MCF 10A (cell line): ENCODE measurements at regions of chr7 and their contacts with region 1.

Region 1: GRCh38 chr7:18352339-18353255 is 143.0 kb upstream of the HDAC9 start:
- DNase-seq: peak; percentile 74
- H3K4me3 Mint-ChIP-seq: peak overlapping the region; percentile 39
- H3K27ac Mint-ChIP-seq: no peak overlapping the region
- H3K4me1 Mint-ChIP-seq: peaks cover 5% of the 10 kb centered on the region
- H3K27me3 Mint-ChIP-seq: no peaks in the 10 kb centered on the region
- CTCF ChIP-seq: peak; percentile 69

Region 2: DNA sequence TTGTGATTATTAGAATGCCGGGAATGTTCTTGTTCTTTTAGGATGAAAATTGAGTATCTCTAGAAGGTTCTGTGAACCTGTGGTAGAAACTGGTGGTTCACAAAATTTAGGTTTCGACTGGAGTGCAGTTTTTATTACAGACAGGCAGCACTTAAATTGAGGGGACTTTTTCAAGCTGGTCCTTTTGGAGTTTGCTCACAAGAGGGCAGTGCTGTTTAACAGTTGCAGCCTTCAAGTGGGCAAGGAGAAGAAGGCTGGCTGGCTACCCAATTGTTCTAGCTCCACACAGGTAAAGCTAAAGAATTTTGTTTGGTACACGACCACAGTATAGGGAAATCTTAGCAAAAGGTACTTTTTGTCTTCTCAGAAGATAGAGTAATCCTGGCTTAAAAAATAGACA is 645.9 kb before region 1 on chr7:
- CTCF ChIA-PET with region 1: interaction called, 10 read pairs
- POLR2A ChIA-PET with region 1: interaction called, 4 read pairs
- intact Hi-C with region 1: no loop called
- DNase-seq: peak; percentile 83
- H3K4me3 Mint-ChIP-seq: no peak overlapping the region
- H3K27ac Mint-ChIP-seq: peak overlapping the region; percentile 55
- H3K4me1 Mint-ChIP-seq: peaks cover 7% of the 10 kb centered on the region
- H3K27me3 Mint-ChIP-seq: no peaks in the 10 kb centered on the region
- CTCF ChIP-seq: peak; percentile 67

Region 3: DNA sequence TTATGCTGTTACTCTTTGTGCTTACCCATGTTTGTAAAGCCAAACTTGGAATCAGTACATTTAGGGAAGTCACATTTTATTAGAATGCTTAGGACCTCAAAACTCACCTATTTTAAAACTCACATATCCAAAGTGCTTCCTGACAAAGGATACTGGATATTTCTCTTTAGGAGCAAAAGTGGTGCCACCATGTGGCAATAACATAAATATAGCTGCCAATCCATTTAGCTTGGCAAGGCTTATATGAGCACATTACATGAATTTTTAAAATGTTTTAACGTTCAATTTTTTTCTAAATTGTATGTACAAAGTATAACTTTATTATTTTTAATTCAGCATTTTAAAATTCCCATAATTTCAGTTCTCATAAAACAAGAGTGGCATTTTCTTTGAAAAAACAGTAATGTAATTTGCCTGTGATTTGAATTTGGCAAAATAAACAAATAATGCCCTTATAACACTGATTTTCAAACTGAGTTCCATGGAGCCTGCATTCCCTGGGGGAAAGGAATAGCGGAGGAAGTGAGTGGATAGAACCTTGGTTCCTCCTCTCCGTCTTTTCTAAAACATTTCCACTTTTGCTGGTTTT is 218.4 kb after region 1 on chr7:
- CTCF ChIA-PET with region 1: interaction called, 291 read pairs
- POLR2A ChIA-PET with region 1: interaction called, 33 read pairs
- intact Hi-C with region 1: loop called (anchors 1 kb)
- DNase-seq: peak; percentile 63
- H3K4me3 Mint-ChIP-seq: no peak overlapping the region
- H3K27ac Mint-ChIP-seq: no peak overlapping the region
- H3K4me1 Mint-ChIP-seq: no peaks in the 10 kb centered on the region
- H3K27me3 Mint-ChIP-seq: no peaks in the 10 kb centered on the region
- CTCF ChIP-seq: peak; percentile 56

Region 4: DNA sequence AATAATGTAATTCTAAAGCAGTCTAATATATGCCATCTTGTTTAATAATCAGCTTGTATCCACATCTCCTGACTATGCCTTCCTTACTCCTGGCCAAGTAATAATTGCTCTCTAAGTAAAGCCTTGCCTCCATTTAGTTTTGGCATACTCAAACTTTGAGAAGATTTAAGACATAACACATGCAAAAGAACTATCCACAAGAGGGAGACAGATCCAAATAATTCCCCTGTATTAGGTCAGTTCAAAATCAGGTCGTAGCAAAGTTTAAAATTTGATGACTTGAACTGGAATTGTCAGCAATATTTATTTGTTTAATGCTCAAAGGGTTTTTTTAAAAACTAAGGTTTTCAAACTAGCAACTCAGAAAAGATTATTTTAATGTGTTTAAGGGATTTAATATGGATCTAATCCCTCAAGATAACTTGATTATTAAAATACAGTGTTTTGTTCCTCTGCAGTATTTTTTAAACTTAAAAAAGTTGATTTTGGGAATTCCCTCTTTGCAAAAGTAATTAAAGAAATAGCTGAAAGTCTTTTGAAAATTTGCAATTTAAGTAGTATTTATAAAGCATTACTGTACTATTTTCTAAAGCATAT is 238.2 kb after region 1 on chr7:
- CTCF ChIA-PET with region 1: interaction called, 23 read pairs
- POLR2A ChIA-PET with region 1: no interaction called
- intact Hi-C with region 1: no loop called
- DNase-seq: peak; percentile 57
- H3K4me3 Mint-ChIP-seq: no peak overlapping the region
- H3K27ac Mint-ChIP-seq: no peak overlapping the region
- H3K4me1 Mint-ChIP-seq: no peaks in the 10 kb centered on the region
- H3K27me3 Mint-ChIP-seq: no peaks in the 10 kb centered on the region
- CTCF ChIP-seq: peak; percentile 54

Region 5: DNA sequence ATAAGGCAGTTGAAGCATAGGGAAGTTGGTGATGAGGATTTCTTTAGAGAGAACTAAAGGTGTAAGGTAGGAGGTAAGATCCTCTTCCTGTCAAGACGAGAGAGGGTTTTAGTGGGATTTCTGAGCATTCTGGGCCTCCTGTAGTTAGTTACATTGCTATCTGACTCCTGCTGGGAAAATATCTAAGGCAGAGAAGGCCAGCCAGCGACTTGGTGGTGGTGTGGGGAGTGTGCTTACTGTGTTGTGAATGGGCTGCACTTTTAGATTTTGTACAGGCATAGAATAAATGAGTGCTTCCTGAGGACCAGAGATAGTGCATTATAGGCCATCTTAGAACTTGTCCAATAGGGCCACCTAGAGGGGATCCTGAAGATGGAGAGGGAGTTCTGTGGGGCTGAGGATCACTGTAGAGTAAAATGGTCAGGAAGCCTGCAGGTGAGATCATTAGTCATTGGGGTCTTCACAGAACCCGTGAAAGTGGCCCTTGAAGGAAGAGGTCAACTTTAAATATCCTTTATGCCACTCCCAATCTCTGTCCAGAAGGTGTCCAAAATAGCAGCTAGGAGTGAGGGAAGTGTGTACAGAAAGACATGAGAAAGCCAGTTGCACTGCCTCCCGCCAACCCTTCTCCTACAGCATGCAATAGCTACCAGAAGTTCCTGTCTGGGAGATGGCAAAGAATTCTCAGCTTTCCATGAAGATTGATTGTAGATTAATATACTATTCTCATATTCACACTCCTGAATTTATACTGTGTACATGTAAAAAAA is 1089.6 kb after region 1 on chr7:
- CTCF ChIA-PET with region 1: no interaction called
- POLR2A ChIA-PET with region 1: no interaction called
- intact Hi-C with region 1: loop called (anchors 2 kb)
- DNase-seq: peak; percentile 67
- H3K4me3 Mint-ChIP-seq: no peak overlapping the region
- H3K27ac Mint-ChIP-seq: no peak overlapping the region
- H3K4me1 Mint-ChIP-seq: peaks cover 6% of the 10 kb centered on the region
- H3K27me3 Mint-ChIP-seq: no peaks in the 10 kb centered on the region
- CTCF ChIP-seq: peak; percentile 46

Region 6: GRCh38 chr7:19665399-19666008 is 1312.9 kb after region 1 on chr7:
- CTCF ChIA-PET with region 1: no interaction called
- POLR2A ChIA-PET with region 1: no interaction called
- intact Hi-C with region 1: loop called (anchors 1 kb)
- DNase-seq: peak; percentile 51
- H3K4me3 Mint-ChIP-seq: no peak overlapping the region
- H3K27ac Mint-ChIP-seq: no peak overlapping the region
- H3K4me1 Mint-ChIP-seq: peaks cover 23% of the 10 kb centered on the region
- H3K27me3 Mint-ChIP-seq: no peaks in the 10 kb centered on the region
- CTCF ChIP-seq: peak; percentile 48